BJ (cell line): ENCODE measurements at regions of chr17 and their contacts with region 1.

Region 1: GRCh38 chr17:7589204-7589868 is 558 bp downstream of the SOX15 start:
- DNase-seq: no peak
- H3K4me3 ChIP-seq: peak overlapping the region; percentile 22; the same call in 1 of the 2 replicates
- H3K27me3 ChIP-seq: no peaks in the 10 kb centered on the region
- CTCF ChIP-seq: peak; percentile 94

Region 2: DNA sequence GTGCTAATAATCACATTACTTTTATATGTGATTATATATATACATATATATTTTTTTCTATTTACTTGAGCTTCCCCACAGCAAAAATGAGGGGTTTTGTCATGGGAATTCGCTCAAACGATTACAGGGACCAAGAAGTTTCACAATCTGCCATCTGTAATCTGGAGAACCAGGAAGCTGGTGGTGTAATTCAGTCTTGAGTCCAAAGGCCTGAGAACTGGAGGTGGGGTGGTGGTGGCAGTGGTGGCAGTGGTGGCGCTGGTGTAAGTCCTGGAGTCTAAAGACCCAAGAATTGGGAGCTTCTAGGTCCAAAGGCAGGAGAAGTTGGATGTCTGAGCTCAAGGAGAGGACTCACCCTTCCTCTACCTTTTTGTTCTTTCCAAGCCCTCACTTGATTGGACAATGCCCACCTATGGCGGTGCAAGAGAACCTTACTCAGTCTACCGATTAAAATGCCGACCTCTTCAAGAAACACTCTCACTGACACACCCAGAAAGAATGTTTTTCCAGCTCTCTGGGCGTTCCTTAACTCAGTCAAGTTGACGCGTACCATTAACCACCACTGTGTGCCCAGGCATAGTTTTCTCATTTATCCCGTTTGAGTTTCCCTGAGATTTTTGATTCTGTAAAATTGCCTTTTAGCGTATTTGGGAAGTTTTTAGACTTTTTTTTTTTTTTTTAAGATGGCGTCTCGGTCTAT is 73.3 kb before region 1 on chr17:
- CTCF ChIA-PET with region 1: interaction called, 29 read pairs
- POLR2A ChIA-PET with region 1: no interaction called
- DNase-seq: no peak
- H3K4me3 ChIP-seq: no peak overlapping the region
- H3K27me3 ChIP-seq: no peaks in the 10 kb centered on the region
- CTCF ChIP-seq: no peak

Region 3: DNA sequence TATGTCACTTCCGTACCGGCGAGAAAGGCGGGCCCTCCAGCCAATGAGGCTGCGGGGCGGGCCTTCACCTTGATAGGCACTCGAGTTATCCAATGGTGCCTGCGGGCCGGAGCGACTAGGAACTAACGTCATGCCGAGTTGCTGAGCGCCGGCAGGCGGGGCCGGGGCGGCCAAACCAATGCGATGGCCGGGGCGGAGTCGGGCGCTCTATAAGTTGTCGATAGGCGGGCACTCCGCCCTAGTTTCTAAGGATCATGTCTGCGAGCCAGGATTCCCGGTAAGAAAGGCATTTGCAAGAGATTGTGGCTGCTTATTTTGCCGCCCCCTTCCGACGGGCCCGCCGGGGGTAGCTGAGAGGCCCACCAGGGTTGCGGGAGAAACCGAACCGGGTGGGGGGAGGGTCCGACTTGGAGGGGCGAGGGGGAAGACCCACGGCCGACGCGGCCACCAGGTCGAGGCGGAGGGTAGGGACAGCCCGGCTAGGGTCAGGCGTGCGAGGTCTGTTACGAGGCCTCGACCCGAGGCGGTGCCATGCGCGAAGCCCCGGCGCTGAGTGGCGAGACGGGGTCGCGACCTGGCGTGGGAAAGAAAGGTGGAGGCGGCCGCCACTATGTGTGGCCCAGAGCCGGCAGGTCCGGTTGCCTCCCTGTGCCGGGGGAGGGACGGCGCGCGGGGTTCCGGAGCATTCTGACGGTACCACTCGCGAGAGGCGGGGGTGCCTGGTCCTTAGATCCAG is 16.6 kb before region 1 on chr17:
- CTCF ChIA-PET with region 1: interaction called, 29 read pairs
- POLR2A ChIA-PET with region 1: interaction called, 6 read pairs
- DNase-seq: peak; percentile 97
- H3K4me3 ChIP-seq: peak overlapping the region; percentile 100
- H3K27me3 ChIP-seq: no peaks in the 10 kb centered on the region
- CTCF ChIP-seq: 0 out of 2 replicates have a peak, but pooled peaks have one; percentile 2

Region 4: GRCh38 chr17:7606280-7606679 is 16.9 kb after region 1 on chr17:
- CTCF ChIA-PET with region 1: interaction called, 22 read pairs
- POLR2A ChIA-PET with region 1: interaction called, 3 read pairs
- DNase-seq: no peak
- H3K4me3 ChIP-seq: no peak overlapping the region
- H3K27me3 ChIP-seq: no peaks in the 10 kb centered on the region
- CTCF ChIP-seq: no peak

Region 5: GRCh38 chr17:8326511-8327302 is 737.4 kb after region 1 on chr17:
- CTCF ChIA-PET with region 1: no interaction called
- POLR2A ChIA-PET with region 1: interaction called, 10 read pairs
- DNase-seq: no peak
- H3K4me3 ChIP-seq: peak overlapping the region; percentile 42
- H3K27me3 ChIP-seq: 0 out of 2 replicates have a peak, but pooled peaks cover 1% of the 10 kb centered on the region
- CTCF ChIP-seq: no peak